WTC11 (cell line): ENCODE measurements at regions of chr16 and their contacts with region 1.

Region 1: GRCh38 chr16:27367461-27368357 is 34.3 kb upstream of the IL21R start:
- DNase-seq: peak; percentile 83
- ATAC-seq: peak; percentile 88
- H3K4me3 Mint-ChIP-seq: peak overlapping the region; percentile 4; the same call in 1 of the 2 replicates
- H3K27ac Mint-ChIP-seq: no peak overlapping the region
- H3K4me1 Mint-ChIP-seq: peaks cover 3% of the 10 kb centered on the region; the same call in 1 of the 2 replicates
- H3K27me3 Mint-ChIP-seq: no peaks in the 10 kb centered on the region; the same call in 1 of the 2 replicates
- CTCF ChIP-seq: peak; percentile 74

Region 2: GRCh38 chr16:27203429-27204231 is 164.1 kb before region 1 on chr16 and contains the start of gene KDM8:
- CTCF ChIA-PET with region 1: interaction called, 10 read pairs
- POLR2A ChIA-PET with region 1: no interaction called
- DNase-seq: peak; percentile 97
- ATAC-seq: peak; percentile 90
- H3K4me3 Mint-ChIP-seq: peak within 1 kb of the TSS; percentile 96
- H3K27ac Mint-ChIP-seq: peak within 1 kb of the TSS; percentile 100
- H3K4me1 Mint-ChIP-seq: peaks cover 18% of the 10 kb centered on the region
- H3K27me3 Mint-ChIP-seq: no peaks in the 10 kb centered on the region; the same call in none of the 2 replicates
- CTCF ChIP-seq: no peak
- total RNA-seq, gene KDM8: 10.9 to 16.5 TPM (median 11.7 TPM) in 3 replicates

Region 3: GRCh38 chr16:27222249-27223225 is 145.2 kb before region 1 on chr16:
- CTCF ChIA-PET with region 1: interaction called, 24 read pairs
- POLR2A ChIA-PET with region 1: no interaction called
- DNase-seq: no peak
- ATAC-seq: no peak
- H3K4me3 Mint-ChIP-seq: no peak overlapping the region
- H3K27ac Mint-ChIP-seq: peak overlapping the region; percentile 15; the same call in 1 of the 2 replicates
- H3K4me1 Mint-ChIP-seq: no peaks in the 10 kb centered on the region
- H3K27me3 Mint-ChIP-seq: no peaks in the 10 kb centered on the region
- CTCF ChIP-seq: no peak

Region 4: GRCh38 chr16:27235055-27235937 is 132.4 kb before region 1 on chr16:
- CTCF ChIA-PET with region 1: interaction called, 109 read pairs
- POLR2A ChIA-PET with region 1: no interaction called
- DNase-seq: peak; percentile 46
- ATAC-seq: peak; percentile 69
- H3K4me3 Mint-ChIP-seq: no peak overlapping the region
- H3K27ac Mint-ChIP-seq: no peak overlapping the region
- H3K4me1 Mint-ChIP-seq: peaks cover 26% of the 10 kb centered on the region
- H3K27me3 Mint-ChIP-seq: no peaks in the 10 kb centered on the region
- CTCF ChIP-seq: peak; percentile 43; the same call in 1 of the 2 replicates

Region 5: DNA sequence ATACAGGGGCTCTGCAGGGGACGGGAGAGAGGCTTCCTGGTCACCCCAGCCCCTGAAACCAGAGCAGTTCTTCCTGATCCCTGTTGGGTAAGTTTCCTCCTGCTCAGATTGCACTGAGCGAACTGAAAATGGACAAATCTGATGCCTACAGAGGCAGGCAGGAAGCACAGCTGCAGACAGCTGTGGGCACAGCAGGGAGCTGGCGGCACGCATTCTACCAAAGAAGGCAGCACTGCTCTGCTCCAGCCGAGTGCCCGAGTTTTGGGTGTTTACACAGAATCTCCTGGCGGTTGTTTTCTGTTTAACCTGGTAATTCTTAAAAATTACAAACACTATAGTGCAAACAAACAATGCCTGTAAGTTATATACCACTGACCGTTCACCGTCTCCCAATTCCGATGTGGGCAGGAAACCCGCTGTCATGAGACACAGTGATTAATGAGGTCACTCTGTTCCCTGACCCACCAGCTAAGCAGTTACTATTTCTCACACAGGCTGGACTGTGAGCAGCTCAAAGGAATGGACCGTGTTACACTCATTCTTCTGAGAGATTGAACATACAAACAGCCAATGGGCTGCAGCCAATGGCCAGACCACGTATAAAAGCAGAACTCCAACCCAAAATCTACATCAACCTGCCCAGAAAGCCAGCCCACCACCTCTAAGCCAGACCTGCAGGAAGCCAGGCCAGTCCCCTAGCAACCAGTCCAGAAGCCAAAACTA is 124.7 kb before region 1 on chr16:
- CTCF ChIA-PET with region 1: interaction called, 109 read pairs
- POLR2A ChIA-PET with region 1: no interaction called
- DNase-seq: no peak
- ATAC-seq: peak; percentile 77
- H3K4me3 Mint-ChIP-seq: no peak overlapping the region
- H3K27ac Mint-ChIP-seq: peak overlapping the region; percentile 68; the same call in 1 of the 2 replicates
- H3K4me1 Mint-ChIP-seq: peaks cover 24% of the 10 kb centered on the region
- H3K27me3 Mint-ChIP-seq: no peaks in the 10 kb centered on the region
- CTCF ChIP-seq: no peak

Region 6: DNA sequence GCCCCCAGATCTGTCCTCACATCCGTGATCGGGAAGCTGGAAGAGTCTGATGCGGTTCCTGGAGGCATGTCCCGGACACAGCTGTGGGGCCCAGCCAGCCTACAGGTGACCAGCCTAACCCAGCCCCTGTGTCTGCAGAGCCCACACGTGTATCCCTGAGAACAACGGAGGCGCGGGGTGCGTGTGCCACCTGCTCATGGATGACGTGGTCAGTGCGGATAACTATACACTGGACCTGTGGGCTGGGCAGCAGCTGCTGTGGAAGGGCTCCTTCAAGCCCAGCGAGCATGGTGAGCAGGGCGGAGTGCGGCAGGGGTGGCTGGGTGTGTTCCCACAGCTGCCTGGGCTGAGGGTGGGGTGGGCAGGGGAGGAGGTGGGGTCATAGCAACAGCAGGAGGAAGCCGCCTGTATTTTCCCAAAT is 23.0 kb before region 1 on chr16:
- CTCF ChIA-PET with region 1: no interaction called
- POLR2A ChIA-PET with region 1: no interaction called
- DNase-seq: no peak
- ATAC-seq: no peak
- H3K4me3 Mint-ChIP-seq: no peak overlapping the region
- H3K27ac Mint-ChIP-seq: no peak overlapping the region
- H3K4me1 Mint-ChIP-seq: no peaks in the 10 kb centered on the region
- H3K27me3 Mint-ChIP-seq: no peaks in the 10 kb centered on the region
- CTCF ChIP-seq: no peak

Region 7: DNA sequence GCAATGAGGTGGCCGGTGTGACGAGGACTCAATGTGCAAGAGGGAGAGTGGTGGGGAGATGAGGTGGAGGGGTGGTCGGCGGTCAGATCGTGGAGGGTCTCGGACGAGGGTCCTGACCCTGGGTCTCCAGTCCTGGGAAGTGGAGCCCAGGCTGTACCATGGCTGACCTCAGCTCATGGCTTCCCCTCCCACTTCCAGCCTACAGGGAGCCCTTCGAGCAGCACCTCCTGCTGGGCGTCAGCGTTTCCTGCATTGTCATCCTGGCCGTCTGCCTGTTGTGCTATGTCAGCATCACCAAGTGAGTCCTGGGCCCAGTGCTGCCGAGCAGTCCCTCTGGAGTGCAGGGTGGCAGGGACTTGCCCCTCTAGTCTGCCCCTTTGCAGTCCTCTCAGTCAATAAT is 12.1 kb before region 1 on chr16:
- CTCF ChIA-PET with region 1: interaction called, 44 read pairs
- POLR2A ChIA-PET with region 1: no interaction called
- DNase-seq: peak; percentile 80
- ATAC-seq: peak; percentile 96
- H3K4me3 Mint-ChIP-seq: no peak overlapping the region
- H3K27ac Mint-ChIP-seq: no peak overlapping the region; the same call in 1 of the 2 replicates
- H3K4me1 Mint-ChIP-seq: peaks cover 3% of the 10 kb centered on the region; the same call in 1 of the 2 replicates
- H3K27me3 Mint-ChIP-seq: no peaks in the 10 kb centered on the region
- CTCF ChIP-seq: no peak